ENCODE measurements at regions of chr16 and their contacts with region 1.

Region 1: DNA sequence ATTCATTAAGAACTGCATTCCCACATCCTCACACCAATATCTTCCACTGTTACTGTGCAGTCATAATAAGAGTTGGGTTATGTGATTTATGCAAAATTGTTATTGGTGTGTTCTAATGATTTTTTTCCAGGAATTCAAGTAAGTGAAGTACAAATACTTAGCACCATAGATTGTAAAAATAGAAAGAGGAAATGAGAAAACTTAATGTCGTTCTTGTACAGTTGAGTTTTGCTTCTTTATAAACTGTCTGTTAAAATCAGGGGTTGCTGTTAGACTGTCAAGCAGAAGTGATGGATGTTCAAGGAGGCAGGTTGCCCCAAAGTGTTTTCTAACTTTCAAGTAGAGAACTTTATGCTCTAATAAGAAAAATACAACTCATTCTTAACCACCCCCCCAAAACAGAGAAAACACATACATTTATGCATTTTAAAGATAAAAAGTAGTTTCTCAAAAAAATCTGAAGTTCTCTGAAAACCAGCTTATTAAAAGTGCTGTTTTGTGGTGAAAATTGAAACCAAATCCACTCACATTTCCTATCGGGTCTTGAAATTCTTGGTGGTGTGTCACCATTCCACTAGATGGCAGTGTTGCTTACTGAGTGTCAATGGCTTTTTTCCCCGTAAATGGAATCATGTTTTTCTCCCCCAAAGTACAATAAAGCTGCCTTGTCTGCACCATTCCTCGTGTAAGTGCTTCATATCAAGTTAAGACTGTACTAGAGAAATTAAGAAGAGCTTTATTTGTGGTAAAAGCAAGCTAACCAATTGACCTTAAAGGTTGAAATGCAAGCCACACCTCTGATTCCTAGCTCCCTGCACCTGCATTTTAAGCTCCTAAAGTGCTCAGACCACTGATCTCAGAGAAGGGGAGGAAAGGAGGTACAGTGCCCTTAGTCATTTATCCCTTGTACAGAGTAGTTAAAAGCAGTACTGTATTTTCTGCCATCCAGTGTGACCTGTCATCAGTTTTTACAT is 4.7 kb upstream of the IGSF6 start:
- DNase-seq: no peak
- ATAC-seq: no peak
- H3K4me3 ChIP-seq: no peak overlapping the region
- H3K27ac ChIP-seq: no peak overlapping the region
- H3K4me1 ChIP-seq: no peaks in the 10 kb centered on the region
- H3K27me3 ChIP-seq: no peaks in the 10 kb centered on the region
- CTCF ChIP-seq: peak; percentile 82

Region 2: DNA sequence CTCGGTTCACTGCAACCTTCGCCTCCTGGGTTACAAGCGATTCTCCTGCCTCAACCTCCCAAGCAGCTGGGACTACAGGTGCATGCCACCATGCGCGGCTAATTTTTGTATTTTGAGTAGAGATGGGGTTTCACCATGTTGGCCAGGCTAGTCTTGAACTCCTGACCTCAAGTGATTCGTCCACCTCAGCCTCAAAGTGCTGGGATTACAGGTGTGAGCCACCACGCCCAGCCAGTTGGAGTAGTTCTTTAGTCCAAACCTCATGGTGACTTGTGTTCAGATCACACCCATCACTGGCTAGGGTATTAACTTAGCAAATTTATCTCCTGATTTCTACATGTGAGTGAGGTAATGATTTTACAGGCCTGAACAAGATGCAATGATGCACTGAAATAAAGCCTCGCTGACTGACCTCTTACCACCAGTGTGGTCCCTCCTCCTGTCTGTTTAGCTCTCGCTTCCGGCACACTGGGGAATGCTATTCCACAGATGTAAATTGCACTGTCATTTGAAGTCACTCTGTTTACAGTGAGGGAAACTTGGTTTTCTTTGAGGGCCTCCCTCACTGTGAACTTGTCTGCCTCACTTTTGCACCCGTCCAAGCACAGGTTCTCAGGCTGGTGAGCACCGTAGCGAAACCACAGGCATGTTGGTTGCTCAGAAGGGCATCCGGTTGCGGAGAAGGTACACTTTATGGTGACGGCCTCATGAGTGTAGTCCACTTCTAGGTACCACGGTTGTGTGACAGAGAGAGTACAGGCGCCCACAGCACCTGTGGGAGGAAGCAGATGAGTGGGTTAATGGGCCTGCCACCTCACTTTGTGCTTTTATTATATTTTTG is 10.1 kb before region 1 on chr16:
- CTCF ChIA-PET with region 1: interaction called, 11 read pairs
- POLR2A ChIA-PET with region 1: no interaction called
- in situ Hi-C with region 1: no loop called
- intact Hi-C with region 1: no loop called
- DNase-seq: no peak
- ATAC-seq: no peak
- H3K4me3 ChIP-seq: no peak overlapping the region
- H3K27ac ChIP-seq: no peak overlapping the region
- H3K4me1 ChIP-seq: 0 out of 2 replicates have a peak, but pooled peaks cover 2% of the 10 kb centered on the region
- H3K27me3 ChIP-seq: no peaks in the 10 kb centered on the region
- CTCF ChIP-seq: no peak

Region 3: GRCh38 chr16:21708533-21709115 is 51.5 kb after region 1 on chr16:
- CTCF ChIA-PET with region 1: interaction called, 11 read pairs
- POLR2A ChIA-PET with region 1: interaction called, 3 read pairs
- in situ Hi-C with region 1: no loop called
- intact Hi-C with region 1: loop called (anchors 2 kb)
- DNase-seq: peak; percentile 51
- ATAC-seq: peak; percentile 80
- H3K4me3 ChIP-seq: no peak overlapping the region
- H3K27ac ChIP-seq: no peak overlapping the region
- H3K4me1 ChIP-seq: no peaks in the 10 kb centered on the region
- H3K27me3 ChIP-seq: no peaks in the 10 kb centered on the region
- CTCF ChIP-seq: peak; percentile 88

Region 4: GRCh38 chr16:22098405-22099255 is 441.5 kb after region 1 on chr16:
- CTCF ChIA-PET with region 1: no interaction called
- POLR2A ChIA-PET with region 1: no interaction called
- in situ Hi-C with region 1: no loop called
- intact Hi-C with region 1: no loop called
- DNase-seq: peak; percentile 41
- ATAC-seq: peak; percentile 95
- H3K4me3 ChIP-seq: peak overlapping the region in 1 of 2 experiments; percentile 44; a peak in 2 of 4 replicates
- H3K27ac ChIP-seq: no peak overlapping the region
- H3K4me1 ChIP-seq: no peaks in the 10 kb centered on the region
- H3K27me3 ChIP-seq: no peaks in the 10 kb centered on the region
- CTCF ChIP-seq: peak; percentile 85

Measured in Panc1 (cell line).